Psoas muscle (tissue), 8 donors: ENCODE measurements at regions of chr12 and their contacts with region 1.

Region 1: DNA sequence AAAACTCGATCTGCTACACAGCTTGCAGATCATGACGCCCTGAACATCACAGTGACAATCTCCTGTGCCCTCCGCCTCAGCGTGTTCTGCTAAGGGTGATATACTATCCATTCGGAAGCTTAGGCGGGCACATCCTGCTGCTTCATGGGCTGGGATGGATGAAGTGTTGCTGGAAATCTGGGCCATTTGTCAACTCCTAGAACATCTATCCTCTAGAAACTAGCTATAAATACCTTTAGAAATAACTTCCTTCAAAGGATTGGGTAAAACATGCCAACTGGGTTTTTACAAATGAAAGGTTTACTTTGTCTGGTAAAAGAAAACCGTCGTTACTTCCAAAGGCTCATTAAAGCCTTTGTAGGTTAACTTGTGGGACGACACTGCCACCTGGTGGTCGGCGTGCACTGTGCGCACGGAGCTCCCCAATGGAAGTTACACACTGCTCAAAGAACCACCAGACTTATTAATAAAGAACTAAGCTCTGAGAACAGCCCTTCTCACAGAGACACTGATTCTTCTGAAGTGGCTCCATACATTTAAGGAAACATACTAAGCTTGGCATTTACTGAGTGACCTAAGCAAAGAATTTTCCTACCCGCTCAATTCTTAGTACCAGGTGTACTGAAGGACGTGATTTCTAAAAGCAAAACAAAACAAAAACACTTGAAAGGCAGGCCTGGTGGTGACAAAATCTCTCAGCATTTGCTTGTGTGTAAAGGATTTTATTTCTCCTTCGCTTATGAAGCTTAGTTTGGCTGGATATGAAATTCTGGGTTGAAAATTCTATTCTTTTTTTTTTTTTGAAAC is 21.6 kb upstream of the CACNA2D4 start:
- DNase-seq: peak; percentile 84 to 93
- ATAC-seq: peak; percentile 72 to 82 (median 76)
- H3K4me3 ChIP-seq: peak overlapping the region; percentile 26
- H3K27ac ChIP-seq: peak overlapping the region; percentile 31
- H3K4me1 ChIP-seq: peaks cover 30% of the 10 kb centered on the region
- H3K27me3 ChIP-seq: no peaks in the 10 kb centered on the region
- CTCF ChIP-seq: peak; percentile 98

Region 2: DNA sequence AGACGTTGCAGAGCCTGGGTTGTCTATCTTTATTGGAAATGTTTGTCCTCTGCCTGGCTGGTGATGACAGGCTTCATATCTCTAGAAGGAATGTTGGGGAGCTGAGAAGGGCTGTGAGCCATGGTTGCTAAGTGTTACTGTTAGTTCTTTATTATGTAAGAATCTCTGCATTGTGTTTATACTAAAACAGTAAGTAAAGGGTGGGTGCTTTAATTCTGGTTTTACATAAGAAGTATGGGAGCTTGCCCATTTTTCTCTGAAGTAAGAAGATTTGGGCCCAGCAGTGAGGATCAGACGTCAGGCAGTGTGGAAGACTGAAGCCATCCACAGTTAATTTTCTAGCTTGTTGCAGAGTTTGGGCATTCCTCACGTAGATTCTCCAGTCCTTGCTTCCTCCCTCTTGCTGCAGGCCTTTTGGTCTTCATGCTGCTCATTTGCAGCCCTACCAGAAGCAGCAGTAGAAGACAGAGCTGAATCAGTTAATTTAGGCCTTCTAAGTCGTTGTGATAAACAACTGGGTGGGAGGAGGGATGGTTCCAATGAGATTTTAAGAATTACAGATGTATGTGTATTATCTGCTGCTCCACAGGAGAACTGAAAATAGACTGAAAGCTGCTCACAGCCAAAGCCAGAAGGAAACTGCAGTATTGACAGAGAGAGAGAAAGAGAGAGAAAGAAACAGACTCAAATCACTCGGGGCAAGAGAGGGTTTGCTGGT is 289.6 kb before region 1 on chr12:
- intact Hi-C with region 1: loop called (anchors 5 kb)
- DNase-seq: no peak
- ATAC-seq: no peak
- H3K4me3 ChIP-seq: no peak overlapping the region
- H3K27ac ChIP-seq: no peak overlapping the region
- H3K4me1 ChIP-seq: no peaks in the 10 kb centered on the region
- H3K27me3 ChIP-seq: peaks cover 0 to 2% (median 0%) of the 10 kb centered on the region in 3 donors
- CTCF ChIP-seq: no peak

Region 3: DNA sequence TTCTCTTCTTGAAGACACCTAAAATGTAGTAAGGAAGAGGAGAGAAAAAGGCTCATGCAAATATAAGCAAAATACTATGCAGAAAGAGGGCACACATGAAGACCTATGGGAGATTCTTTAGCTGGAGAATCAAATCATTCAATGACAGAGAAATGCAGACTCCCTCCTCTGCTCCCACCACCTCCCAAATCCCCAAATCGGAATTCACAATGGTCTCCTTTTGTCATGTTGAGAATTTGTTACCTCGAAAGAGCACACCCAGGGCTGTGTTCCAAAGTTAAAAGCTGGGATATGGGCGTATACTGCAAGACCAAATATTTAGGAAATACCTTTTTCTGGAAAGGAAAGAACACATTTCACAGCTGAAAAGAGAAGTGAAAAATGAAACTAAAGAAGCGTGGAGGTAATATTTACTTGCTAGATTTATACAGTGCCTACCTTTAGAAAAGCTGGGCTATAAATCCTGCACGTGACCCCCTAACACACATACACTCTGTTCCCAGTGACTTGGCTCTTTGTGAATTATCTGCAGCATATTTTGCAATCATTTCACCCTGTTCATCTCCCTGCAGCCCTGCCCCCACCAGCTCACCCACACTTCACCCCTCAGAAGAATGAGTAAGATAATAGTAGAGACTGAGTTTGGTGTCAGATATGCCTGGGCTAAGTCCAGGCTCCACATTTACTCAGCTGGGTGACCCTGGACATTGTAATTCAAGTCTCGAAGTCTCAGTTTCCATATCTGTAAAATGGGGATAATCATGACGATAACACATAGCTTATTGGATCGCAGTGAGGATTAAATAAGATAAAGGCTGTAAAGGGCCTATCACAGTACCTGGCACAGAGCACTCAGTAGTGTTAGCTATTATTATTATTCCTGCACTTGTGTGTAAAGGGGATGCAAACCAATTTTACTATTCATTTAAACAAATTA is 109.9 kb after region 1 on chr12:
- intact Hi-C with region 1: no loop called
- DNase-seq: no peak
- ATAC-seq: no peak
- H3K4me3 ChIP-seq: no peak overlapping the region
- H3K27ac ChIP-seq: no peak overlapping the region
- H3K4me1 ChIP-seq: no peaks in the 10 kb centered on the region
- H3K27me3 ChIP-seq: peaks cover 10 to 43% (median 24%) of the 10 kb centered on the region in 3 donors
- CTCF ChIP-seq: no peak